Head of caudate nucleus (tissue), 42 donors: ENCODE measurements at regions of chr10 and their contacts with region 1.

Region 1: DNA sequence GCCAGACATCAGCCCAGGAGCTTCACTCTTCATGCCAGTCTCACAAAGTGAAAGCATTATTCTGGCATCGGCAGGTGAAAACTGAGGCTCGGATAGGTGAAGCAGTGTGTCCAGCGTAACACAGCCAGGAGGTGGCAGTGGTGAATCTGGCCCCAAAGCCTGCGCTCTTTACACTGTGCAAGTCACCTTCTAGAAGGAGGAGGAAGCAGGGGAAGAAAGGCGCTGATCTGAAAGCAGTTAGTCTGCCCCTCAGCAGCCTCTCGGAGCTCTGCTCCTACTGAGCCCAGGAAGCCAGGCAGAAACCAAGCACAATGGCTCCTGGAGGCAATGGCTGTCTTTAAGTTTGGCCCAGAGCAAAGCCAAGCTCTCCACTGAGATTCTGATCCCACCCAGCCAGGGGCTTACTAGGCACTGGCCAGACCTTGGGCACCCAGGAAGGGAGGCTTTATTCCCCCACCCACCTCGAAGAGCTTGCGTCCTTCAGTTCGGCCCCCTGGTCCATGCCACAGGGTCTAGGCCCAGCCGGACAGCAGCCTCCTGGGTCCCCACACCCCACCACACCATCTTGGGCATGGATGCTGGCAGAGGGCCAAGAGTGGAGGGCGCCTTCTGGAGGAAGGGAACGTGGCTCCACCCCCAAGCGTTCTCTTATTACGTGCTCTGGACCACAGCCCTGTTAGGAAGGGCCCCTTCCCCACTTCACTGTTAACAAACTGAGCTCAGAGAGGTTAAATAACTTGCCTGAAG is 104.5 kb downstream of the GRID1 start:
- DNase-seq: peak in 40 of 42 donors; percentile 35 to 83 (median 66)

Region 2: GRCh38 chr10:86182150-86182549 is 80.0 kb before region 1 on chr10:
- intact Hi-C with region 1: loop called (anchors 10 kb)
- DNase-seq: peak; percentile 62 to 92 (median 84)

Region 3: GRCh38 chr10:86317949-86318725 is 56.0 kb after region 1 on chr10:
- intact Hi-C with region 1: loop called (anchors 5 kb)
- DNase-seq: peak in 2 of 42 donors; percentile 11 to 32

Region 4: DNA sequence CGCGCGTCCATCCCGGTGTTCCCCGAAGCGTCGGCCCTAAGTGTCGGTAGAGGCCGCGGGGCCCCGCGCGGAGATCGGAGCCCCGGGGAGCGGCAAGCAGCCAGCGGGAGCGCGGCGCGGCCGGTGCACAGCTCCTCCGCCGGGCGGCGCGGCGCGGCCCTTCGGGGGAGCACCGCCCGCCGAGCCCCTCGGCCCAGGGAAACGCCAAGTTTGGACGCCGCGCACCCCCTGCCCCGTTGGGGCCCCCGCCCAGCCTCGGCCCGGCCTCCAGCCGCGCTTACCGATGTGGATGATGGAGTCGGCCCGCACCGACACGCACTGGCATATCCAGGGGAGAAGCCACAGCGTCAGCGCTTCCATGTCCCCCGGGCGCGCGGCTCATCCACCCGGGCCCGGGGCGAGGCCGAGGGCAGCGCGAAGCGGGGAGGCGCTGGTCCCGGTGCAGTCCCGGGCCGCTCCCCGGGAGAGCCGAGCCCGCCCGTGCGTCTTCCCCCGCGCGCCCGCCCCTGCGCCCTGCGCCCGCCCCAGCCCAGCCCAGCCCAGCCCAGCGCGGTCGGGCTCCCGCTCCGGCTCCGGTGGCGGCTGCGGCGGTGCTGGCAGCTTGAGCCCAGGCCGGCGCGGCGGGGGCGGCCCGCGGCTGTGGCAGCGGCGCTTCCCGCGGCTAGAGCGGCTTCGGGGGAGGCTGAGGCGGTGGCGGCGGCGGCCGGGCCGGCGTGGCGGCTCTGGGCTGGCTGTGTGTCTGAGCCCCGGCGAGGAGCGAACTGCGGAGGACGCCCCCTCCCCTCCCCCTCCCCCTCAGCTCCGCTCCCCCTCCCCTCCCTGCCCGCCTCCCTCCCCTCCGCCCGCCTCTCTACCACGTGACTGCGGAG is 104.2 kb after region 1 on chr10 and contains the start of gene GRID1:
- intact Hi-C with region 1: loop called (anchors 5 kb)
- DNase-seq: peak; percentile 17 to 92 (median 82)